PC-3 (cell line): ENCODE measurements at regions of chr18 and their contacts with region 1.

Region 1: DNA sequence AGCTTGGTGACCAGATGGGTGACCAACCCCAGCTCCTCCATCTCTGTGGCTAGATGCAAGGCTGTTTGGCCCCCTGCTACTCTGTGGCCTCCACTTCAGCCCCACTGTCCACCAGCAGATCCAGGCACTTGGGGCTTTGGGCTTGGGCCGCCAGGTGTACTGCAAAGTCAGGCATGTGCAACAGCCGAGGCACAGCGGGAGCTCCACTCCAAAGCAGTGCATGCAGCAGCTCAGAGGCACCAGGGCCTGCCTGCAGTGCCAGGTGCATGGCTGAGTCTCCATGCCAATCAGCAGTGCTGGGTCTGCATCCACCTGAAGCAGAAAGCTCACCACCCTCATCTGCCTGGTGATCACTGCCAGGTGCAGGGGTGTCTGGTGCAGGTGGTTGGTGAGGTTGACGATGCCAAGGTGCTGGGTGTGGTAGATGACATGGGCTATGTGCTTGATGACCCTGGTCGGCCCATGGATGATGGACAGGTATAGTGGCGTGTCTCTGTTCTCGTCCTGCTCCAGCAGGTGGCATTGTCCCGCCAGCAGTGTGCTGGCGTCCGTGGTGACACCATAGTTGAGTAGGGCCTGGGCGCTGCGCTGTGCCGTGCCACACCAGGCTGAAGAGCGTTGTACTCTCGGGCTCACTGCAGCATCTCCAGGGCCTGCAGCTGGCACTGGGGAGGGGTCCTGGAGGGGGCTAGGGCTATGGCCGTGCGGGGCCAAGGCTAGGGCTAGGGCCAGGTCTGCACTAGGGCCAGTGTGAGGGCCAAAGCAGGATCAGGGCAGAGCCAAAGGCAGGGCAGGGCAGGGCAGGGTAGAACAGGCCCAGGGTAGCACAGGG is 1.0 kb upstream of the ANKRD62 start:
- DNase-seq: peak; percentile 84
- ATAC-seq: peak; percentile 100
- H3K4me3 ChIP-seq: no peak overlapping the region
- H3K27ac ChIP-seq: no peak overlapping the region
- H3K4me1 ChIP-seq: peaks cover 6% of the 10 kb centered on the region
- H3K27me3 ChIP-seq: no peaks in the 10 kb centered on the region
- CTCF ChIP-seq: peak; percentile 89

Region 2: GRCh38 chr18:11591957-11592356 is 500.7 kb before region 1 on chr18:
- CTCF ChIA-PET with region 1: no interaction called
- POLR2A ChIA-PET with region 1: no interaction called
- intact Hi-C with region 1: no loop called
- DNase-seq: peak; percentile 23
- ATAC-seq: no peak
- H3K4me3 ChIP-seq: no peak overlapping the region
- H3K27ac ChIP-seq: no peak overlapping the region
- H3K4me1 ChIP-seq: no peaks in the 10 kb centered on the region
- H3K27me3 ChIP-seq: peaks cover 69% of the 10 kb centered on the region
- CTCF ChIP-seq: peak; percentile 38; the same call in 1 of the 2 replicates

Region 3: GRCh38 chr18:12121175-12122042 is 28.8 kb after region 1 on chr18:
- CTCF ChIA-PET with region 1: no interaction called
- POLR2A ChIA-PET with region 1: no interaction called
- intact Hi-C with region 1: loop called (anchors 1 kb)
- DNase-seq: peak; percentile 39
- ATAC-seq: peak; percentile 58
- H3K4me3 ChIP-seq: no peak overlapping the region
- H3K27ac ChIP-seq: no peak overlapping the region
- H3K4me1 ChIP-seq: no peaks in the 10 kb centered on the region
- H3K27me3 ChIP-seq: peaks cover 60% of the 10 kb centered on the region
- CTCF ChIP-seq: peak; percentile 58

Region 4: DNA sequence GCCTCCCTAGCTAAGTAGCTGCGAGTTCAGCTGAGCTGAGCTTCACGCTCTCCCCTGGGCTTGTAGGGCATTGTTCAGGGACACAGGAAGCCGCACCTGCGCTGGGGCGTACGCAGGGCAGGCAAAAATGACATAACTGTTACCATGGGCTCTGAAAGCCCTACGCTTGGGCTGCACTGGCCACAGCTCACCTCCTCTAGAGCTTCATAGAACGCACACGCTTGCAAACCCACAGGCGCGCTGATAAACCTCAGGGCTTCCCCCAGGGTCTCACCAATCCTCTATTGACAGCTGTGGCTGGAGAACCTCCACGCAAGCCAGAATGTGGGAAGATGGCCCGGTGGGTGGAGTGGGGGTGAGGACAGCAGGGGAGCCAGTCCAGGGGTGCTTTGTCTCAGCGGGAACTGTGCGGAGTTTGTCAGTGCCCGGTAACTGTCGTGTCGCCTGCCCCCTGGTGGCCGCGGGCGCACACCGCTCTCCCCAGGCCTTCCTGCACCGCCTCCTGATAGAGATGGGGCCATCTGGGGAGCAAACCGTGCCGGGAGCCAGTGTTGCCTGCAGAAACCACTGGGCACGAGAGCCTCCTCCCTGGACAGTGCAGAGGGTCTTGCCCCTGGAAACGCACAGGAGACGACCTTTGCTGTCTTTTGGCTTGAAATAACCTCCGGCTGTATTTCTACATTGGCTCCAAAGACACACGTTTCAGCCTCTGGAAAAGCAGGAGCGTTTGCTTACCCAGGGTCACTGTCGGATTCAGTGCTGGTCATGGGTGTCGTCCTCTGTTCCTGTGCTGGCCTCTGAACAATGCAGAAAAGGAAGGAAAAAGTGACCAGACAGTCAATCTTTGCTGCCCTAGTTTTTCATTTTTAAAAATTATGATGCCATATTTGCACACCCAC is 144.6 kb after region 1 on chr18:
- CTCF ChIA-PET with region 1: no interaction called
- POLR2A ChIA-PET with region 1: no interaction called
- intact Hi-C with region 1: loop called (anchors 1 kb)
- DNase-seq: peak; percentile 76
- ATAC-seq: peak; percentile 99
- H3K4me3 ChIP-seq: peak overlapping the region; percentile 10; the same call in 1 of the 2 replicates
- H3K27ac ChIP-seq: no peak overlapping the region
- H3K4me1 ChIP-seq: no peaks in the 10 kb centered on the region
- H3K27me3 ChIP-seq: peaks cover 5% of the 10 kb centered on the region; the same call in 1 of the 2 replicates
- CTCF ChIP-seq: peak; percentile 94